Heart right ventricle (tissue), 16 donors: ENCODE measurements at regions of chr2 and their contacts with region 1.

Region 1: DNA sequence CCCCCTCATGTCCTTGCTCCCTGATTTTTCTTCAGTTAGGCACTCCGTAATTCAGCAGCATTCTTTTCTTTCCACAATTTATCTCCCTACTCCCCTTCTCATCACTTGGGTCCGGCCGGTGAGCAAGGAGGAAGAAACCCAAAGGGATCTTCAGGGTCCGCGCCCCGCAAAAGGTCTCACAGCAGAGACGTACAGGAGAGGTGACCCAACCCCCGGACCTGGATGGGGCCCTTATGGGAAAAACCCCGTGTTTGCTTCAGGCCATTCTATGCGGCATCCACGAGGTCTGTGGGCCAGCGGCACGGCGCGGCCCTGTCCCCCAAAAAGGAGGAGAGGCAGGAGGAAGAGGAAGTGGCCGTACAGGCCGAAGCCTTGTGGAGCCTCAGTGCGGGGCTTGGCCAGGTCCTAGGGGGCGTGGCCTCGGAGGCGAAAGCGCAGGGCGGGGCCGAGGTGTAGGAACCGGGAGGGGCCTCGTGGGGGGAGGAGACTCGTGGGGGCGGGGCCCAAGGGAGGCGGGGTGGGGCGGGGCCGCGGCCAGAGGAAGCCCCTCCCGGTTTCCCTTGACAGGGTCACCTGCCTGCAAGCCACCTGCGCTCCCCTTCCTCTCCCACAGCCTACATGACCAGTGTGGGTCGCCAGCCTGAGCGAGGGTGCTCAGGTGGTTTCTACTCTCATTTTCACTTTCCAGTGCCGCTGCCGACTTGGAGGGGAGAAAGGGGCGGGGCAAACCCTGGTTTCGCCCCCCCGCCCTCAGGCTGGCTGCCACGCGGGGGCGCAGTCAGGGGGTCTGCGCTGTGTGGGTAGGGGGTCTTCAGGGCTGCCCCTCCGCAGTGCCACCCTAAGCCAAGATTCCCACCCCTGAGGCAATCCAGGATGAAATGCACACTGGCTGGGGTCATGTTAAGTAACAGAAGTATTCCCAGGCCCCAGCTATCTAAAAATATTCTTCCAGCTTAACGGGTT is 156.4 kb upstream of the XPO1 start:
- DNase-seq: peak; percentile 94 to 97
- ATAC-seq: peak; percentile 100
- H3K4me3 ChIP-seq: peak overlapping the region; percentile 49 to 90 (median 78)
- H3K27ac ChIP-seq: peak overlapping the region; percentile 57 to 88 (median 86)
- H3K4me1 ChIP-seq: peaks cover 0 to 15% (median 5%) of the 10 kb centered on the region in 9 donors
- H3K27me3 ChIP-seq: no peaks in the 10 kb centered on the region
- CTCF ChIP-seq: peak; percentile 14 to 74 (median 55)

Region 2: GRCh38 chr2:60226980-60227379 is 1467.6 kb before region 1 on chr2:
- intact Hi-C with region 1: no loop called
- DNase-seq: no peak
- ATAC-seq: no peak
- H3K4me3 ChIP-seq: no peak overlapping the region
- H3K27ac ChIP-seq: no peak overlapping the region
- H3K4me1 ChIP-seq: no peaks in the 10 kb centered on the region
- H3K27me3 ChIP-seq: no peaks in the 10 kb centered on the region
- CTCF ChIP-seq: no peak

Region 3: DNA sequence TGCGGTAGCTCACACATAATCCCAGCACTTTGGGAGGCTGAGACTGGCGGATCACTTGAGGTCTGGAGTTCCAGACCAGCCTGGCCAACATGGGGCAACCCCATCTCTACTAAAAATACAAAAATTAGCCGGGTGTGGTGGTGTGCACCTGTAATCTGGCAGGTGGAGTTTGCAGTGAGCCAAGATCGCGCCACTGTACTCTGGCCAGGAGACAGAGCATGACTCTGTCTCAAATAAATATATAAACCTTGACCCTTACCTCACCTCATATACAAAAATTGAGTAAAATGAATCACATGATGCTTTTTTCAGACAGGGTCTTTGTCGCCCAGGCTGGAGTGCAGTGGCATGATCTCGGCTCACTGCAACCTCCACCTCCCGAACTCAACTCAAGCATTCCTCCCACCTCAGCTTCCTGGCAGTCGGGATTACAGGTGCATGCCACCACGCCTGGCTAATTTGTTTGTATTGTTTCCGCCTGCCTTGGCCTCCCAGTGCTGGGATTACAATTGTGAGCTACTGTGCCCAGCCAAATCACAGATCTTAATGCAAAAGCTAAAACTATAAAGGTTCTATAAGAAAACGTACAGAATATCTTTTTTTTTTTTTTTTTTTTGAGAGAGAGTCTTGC is 181.7 kb before region 1 on chr2:
- intact Hi-C with region 1: no loop called
- DNase-seq: no peak
- ATAC-seq: no peak
- H3K4me3 ChIP-seq: no peak overlapping the region
- H3K27ac ChIP-seq: no peak overlapping the region
- H3K4me1 ChIP-seq: no peaks in the 10 kb centered on the region
- H3K27me3 ChIP-seq: no peaks in the 10 kb centered on the region
- CTCF ChIP-seq: no peak

Region 4: GRCh38 chr2:61658841-61659780 is 35.5 kb before region 1 on chr2:
- intact Hi-C with region 1: loop called in 1 of 10 experiments (anchors 1 kb)
- DNase-seq: peak in 1 of 2 donors; percentile 32
- ATAC-seq: peak; percentile 73 to 93 (median 91)
- H3K4me3 ChIP-seq: no peak overlapping the region
- H3K27ac ChIP-seq: peak overlapping the region; percentile 78 to 90 (median 84)
- H3K4me1 ChIP-seq: peaks cover 0 to 31% (median 17%) of the 10 kb centered on the region in 9 donors
- H3K27me3 ChIP-seq: no peaks in the 10 kb centered on the region
- CTCF ChIP-seq: peak; percentile 20 to 67 (median 48)

Region 5: GRCh38 chr2:61670591-61671501 is 23.7 kb before region 1 on chr2:
- intact Hi-C with region 1: loop called in 1 of 10 experiments (anchors 2 kb)
- DNase-seq: peak; percentile 28 to 36
- ATAC-seq: peak; percentile 78 to 92 (median 87)
- H3K4me3 ChIP-seq: peak overlapping the region in 9 of 10 donors; percentile 8 to 31 (median 25)
- H3K27ac ChIP-seq: peak overlapping the region; percentile 70 to 89 (median 80)
- H3K4me1 ChIP-seq: peaks cover 4 to 23% (median 19%) of the 10 kb centered on the region in 9 donors
- H3K27me3 ChIP-seq: no peaks in the 10 kb centered on the region
- CTCF ChIP-seq: no peak

Region 6: GRCh38 chr2:61736953-61737352 is 42.4 kb after region 1 on chr2:
- intact Hi-C with region 1: no loop called
- DNase-seq: no peak
- ATAC-seq: no peak
- H3K4me3 ChIP-seq: no peak overlapping the region
- H3K27ac ChIP-seq: no peak overlapping the region
- H3K4me1 ChIP-seq: no peaks in the 10 kb centered on the region
- H3K27me3 ChIP-seq: no peaks in the 10 kb centered on the region
- CTCF ChIP-seq: no peak